Colonic mucosa (tissue), 4 donors: ENCODE measurements at regions of chr5 and their contacts with region 1.

Region 1: DNA sequence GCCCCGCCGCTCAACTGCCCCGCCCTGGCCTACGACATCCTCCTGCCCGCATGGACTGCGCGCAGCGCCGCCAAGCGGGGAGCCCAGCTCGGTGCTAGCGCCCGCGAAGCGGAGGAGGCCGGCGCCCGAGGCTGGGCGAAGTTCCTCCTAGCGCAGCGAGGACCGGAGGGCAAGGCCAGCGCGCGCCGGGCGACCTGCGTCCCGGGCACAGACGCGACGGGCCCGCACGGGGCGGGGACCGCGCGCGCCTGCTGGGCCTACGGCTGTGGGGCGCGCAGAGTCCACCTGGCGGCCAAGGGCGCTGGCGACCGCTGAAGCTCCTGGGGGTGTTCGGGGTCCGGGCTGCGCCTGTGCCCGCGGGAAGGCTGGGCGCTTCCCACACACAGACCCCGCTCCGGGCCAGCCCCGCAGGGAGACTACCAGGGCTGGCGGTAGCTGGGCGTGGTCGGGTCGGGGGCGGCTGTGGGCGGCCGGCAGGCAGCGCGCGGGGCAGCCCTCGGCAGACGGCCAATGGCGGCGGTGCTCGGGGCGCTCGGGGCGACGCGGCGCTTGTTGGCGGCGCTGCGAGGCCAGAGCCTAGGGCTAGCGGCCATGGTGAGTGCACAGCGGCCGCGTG is at the start of gene PCBD2:
- DNase-seq: peak; percentile 93
- H3K4me3 ChIP-seq: peak within 1 kb of the TSS; percentile 77
- H3K27ac ChIP-seq: peak within 1 kb of the TSS; percentile 99
- H3K4me1 ChIP-seq: no peaks in the 10 kb centered on the region
- H3K27me3 ChIP-seq: no peaks in the 10 kb centered on the region
- CTCF ChIP-seq: peak; percentile 93
- total RNA-seq, gene PCBD2: 10.3 to 13.9 TPM

Region 2: GRCh38 chr5:134738133-134738962 is 166.4 kb before region 1 on chr5 and contains the start of gene CAMLG:
- intact Hi-C with region 1: loop called (anchors 2 kb)
- DNase-seq: peak; percentile 99
- H3K4me3 ChIP-seq: peak within 1 kb of the TSS; percentile 87
- H3K27ac ChIP-seq: peak within 1 kb of the TSS; percentile 80
- H3K4me1 ChIP-seq: peaks cover 6% of the 10 kb centered on the region
- H3K27me3 ChIP-seq: no peaks in the 10 kb centered on the region
- CTCF ChIP-seq: peak; percentile 49
- total RNA-seq, gene CAMLG: 21.2 to 27.6 TPM

Region 3: GRCh38 chr5:134878403-134878802 is 26.3 kb before region 1 on chr5:
- intact Hi-C with region 1: loop called (anchors 2 kb)
- DNase-seq: peak; percentile 34
- H3K4me3 ChIP-seq: no peak overlapping the region
- H3K27ac ChIP-seq: no peak overlapping the region
- H3K4me1 ChIP-seq: no peaks in the 10 kb centered on the region
- H3K27me3 ChIP-seq: no peaks in the 10 kb centered on the region
- CTCF ChIP-seq: no peak